ENCODE measurements at regions of chr17 and their contacts with region 1.

Region 1: DNA sequence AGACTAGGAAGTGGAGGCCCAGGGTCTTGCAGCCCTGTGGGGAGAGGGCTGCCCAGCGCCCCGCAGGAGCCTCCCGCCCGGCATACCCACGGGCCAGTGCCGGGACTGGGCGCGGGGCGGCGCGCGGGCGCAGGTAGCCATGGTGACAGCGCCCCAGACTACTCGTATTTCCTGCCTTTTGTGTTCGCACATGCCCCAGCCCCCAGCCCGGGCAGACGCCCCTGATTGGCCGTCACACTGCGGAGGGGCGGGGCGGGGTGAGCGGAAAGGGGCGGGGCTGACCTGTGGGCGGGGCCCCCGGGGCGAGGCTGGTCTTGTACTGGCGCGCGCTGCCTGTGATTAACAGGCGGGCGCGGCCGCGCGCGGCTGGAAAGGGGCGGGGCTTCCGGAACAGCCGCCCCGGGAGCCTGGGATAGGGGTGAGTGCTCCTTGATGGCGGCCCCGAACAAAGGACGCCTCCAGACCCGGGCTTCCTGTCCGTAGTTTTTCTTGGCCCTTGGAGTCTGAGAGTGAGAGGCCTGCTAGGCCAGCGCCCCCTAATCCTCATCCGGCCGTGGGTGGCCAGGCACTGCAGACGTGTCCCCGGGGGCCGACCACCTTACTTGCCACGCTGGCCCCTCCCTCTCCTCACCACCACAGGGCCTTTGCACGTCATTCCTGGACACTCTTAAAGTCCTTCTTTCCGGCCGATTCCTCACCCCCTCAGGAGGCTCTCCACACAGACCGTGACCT is 71.0 kb downstream of the RAI1 start:
- DNase-seq: peak; percentile 94 to 98 (median 97)
- ATAC-seq: peak; percentile 82
- H3K4me3 ChIP-seq: peak overlapping the region; percentile 87
- H3K4me3 Mint-ChIP-seq: peak overlapping the region; percentile 67
- H3K27ac ChIP-seq: peak overlapping the region; percentile 89 to 90
- H3K27ac Mint-ChIP-seq: peak overlapping the region; percentile 95
- H3K4me1 ChIP-seq: peaks cover 83% of the 10 kb centered on the region
- H3K4me1 Mint-ChIP-seq: peaks cover 81% of the 10 kb centered on the region
- H3K27me3 ChIP-seq: no peaks in the 10 kb centered on the region
- H3K27me3 Mint-ChIP-seq: no peaks in the 10 kb centered on the region
- CTCF ChIP-seq: peak; percentile 58

Region 2: DNA sequence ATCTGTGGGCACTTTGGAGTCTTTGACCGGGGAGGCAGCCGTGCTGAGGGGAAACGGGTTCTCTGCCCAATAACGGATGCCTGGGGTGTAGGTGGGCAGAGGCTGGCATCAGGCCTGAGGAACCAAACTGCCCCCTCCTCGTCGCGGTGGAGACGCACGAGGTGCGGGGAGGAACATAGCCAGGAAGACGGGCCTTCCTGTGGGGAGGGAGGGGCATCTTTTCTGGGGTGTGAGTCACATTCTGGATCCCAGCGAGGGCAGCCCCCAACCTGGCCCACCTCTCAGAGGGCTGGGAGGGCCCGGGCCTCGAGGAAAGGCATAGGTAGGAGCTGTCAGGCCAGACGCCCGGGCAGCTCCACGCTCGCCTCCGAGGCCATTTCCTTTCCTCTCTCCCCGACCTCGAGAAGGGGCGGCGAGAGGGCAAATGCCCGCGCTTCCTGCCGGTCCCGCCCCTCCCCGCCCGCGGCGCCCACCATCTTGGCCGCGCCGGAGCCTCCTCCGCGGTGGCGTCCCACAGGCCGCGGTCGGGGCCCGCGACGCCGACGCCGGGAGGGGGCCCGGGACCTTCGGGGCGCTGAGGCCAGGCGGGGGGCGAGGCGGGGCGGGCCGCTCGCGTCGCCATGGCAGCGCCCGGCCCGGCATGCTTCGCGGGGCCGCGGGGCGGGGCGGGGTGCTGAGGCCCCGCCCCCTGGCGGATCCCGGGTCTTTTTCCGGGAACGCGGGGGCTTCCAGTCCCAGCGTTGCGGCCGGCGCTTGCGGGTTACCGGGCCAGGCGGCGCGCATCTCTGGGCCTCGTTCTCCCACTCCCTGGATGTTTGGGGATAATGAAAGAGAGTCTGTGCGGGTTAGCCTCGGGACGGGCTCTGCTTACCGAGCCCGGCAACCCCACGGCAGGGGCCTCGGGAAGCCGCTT is 57.8 kb before region 1 on chr17:
- CTCF ChIA-PET with region 1: no interaction called
- POLR2A ChIA-PET with region 1: interaction called, 3 read pairs
- intact Hi-C with region 1: loop called in 1 of 2 experiments (anchors 2 kb)
- DNase-seq: peak; percentile 43 to 89 (median 63)
- ATAC-seq: peak; percentile 72
- H3K4me3 ChIP-seq: peak overlapping the region; percentile 76
- H3K4me3 Mint-ChIP-seq: peak overlapping the region; percentile 94
- H3K27ac ChIP-seq: peak overlapping the region; percentile 91 to 95
- H3K27ac Mint-ChIP-seq: peak overlapping the region; percentile 96
- H3K4me1 ChIP-seq: peaks cover 61% of the 10 kb centered on the region
- H3K4me1 Mint-ChIP-seq: peaks cover 62% of the 10 kb centered on the region
- H3K27me3 ChIP-seq: no peaks in the 10 kb centered on the region
- H3K27me3 Mint-ChIP-seq: no peaks in the 10 kb centered on the region
- CTCF ChIP-seq: no peak

Region 3: DNA sequence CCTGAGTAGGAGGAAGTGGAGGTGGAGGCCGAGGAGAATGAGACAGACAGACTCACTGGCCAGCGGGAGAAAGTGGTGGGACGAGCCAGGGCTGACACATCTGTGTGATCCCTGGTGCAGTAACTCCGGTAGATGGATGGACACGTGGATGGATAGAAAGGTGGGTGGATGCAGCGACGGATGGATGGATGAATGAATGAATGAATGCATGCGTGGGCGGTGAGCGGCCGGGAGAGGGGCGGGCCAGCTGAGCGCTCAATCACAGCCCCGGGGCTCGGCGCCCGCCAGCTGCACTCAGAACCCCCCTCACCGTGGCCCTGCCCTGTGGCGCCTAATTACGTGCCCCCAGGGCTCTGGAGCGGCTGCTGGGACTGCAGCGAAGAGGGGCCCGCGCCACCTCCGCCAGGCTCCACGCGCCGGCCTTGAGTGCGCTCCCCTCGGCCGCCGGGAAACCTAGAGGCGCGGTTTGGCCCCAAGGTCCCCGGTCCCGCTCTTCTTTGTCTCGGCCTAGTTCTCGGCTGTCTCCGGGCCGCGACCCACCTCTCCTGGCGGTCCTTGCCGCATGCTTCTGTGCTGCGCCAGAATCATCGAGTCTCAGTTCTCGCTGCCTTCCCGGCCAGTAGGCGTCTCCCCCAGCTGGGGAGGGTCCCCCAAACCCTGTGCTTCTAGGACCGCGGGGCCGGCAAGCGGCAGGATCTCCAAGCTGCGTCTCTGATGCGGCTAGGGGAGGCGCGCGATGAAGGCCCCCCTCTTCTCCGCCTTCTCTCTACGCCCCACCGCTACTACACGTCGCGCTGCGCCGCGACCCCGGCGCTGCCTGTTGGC is 30.0 kb before region 1 on chr17:
- CTCF ChIA-PET with region 1: no interaction called
- POLR2A ChIA-PET with region 1: no interaction called
- intact Hi-C with region 1: no loop called
- DNase-seq: peak in 2 of 14 experiments; percentile 10 to 20
- ATAC-seq: peak; percentile 28
- H3K4me3 ChIP-seq: peak overlapping the region; percentile 58
- H3K4me3 Mint-ChIP-seq: peak overlapping the region; percentile 81
- H3K27ac ChIP-seq: no peak overlapping the region
- H3K27ac Mint-ChIP-seq: peak overlapping the region; percentile 11
- H3K4me1 ChIP-seq: peaks cover 33% of the 10 kb centered on the region
- H3K4me1 Mint-ChIP-seq: peaks cover 56% of the 10 kb centered on the region
- H3K27me3 ChIP-seq: peaks cover 4 to 22% of the 10 kb centered on the region in 2 experiments
- H3K27me3 Mint-ChIP-seq: peaks cover 29% of the 10 kb centered on the region
- CTCF ChIP-seq: no peak

Region 4: GRCh38 chr17:17739388-17740066 is 12.7 kb before region 1 on chr17:
- CTCF ChIA-PET with region 1: no interaction called
- POLR2A ChIA-PET with region 1: interaction called, 21 read pairs
- intact Hi-C with region 1: no loop called
- DNase-seq: no peak
- ATAC-seq: no peak
- H3K4me3 ChIP-seq: no peak overlapping the region
- H3K4me3 Mint-ChIP-seq: peak overlapping the region; percentile 45
- H3K27ac ChIP-seq: no peak overlapping the region
- H3K27ac Mint-ChIP-seq: peak overlapping the region; percentile 81
- H3K4me1 ChIP-seq: peaks cover 46% of the 10 kb centered on the region
- H3K4me1 Mint-ChIP-seq: peaks cover 42% of the 10 kb centered on the region
- H3K27me3 ChIP-seq: no peaks in the 10 kb centered on the region
- H3K27me3 Mint-ChIP-seq: no peaks in the 10 kb centered on the region
- CTCF ChIP-seq: no peak

Region 5: GRCh38 chr17:17766077-17766743 is 14.0 kb after region 1 on chr17:
- CTCF ChIA-PET with region 1: no interaction called
- POLR2A ChIA-PET with region 1: no interaction called
- intact Hi-C with region 1: loop called in 1 of 2 experiments (anchors 1 kb)
- DNase-seq: peak in 1 of 14 experiments; percentile 21
- ATAC-seq: peak; percentile 63
- H3K4me3 ChIP-seq: no peak overlapping the region
- H3K4me3 Mint-ChIP-seq: peak overlapping the region; percentile 48
- H3K27ac ChIP-seq: no peak overlapping the region
- H3K27ac Mint-ChIP-seq: peak overlapping the region; percentile 80
- H3K4me1 ChIP-seq: peaks cover 11% of the 10 kb centered on the region
- H3K4me1 Mint-ChIP-seq: peaks cover 27% of the 10 kb centered on the region
- H3K27me3 ChIP-seq: no peaks in the 10 kb centered on the region
- H3K27me3 Mint-ChIP-seq: no peaks in the 10 kb centered on the region
- CTCF ChIP-seq: no peak

Region 6: GRCh38 chr17:17792551-17793377 is 40.5 kb after region 1 on chr17:
- CTCF ChIA-PET with region 1: no interaction called
- POLR2A ChIA-PET with region 1: interaction called, 4 read pairs
- intact Hi-C with region 1: loop called (anchors 5 kb)
- DNase-seq: peak; percentile 26 to 91 (median 56)
- ATAC-seq: peak; percentile 86
- H3K4me3 ChIP-seq: peak overlapping the region; percentile 22
- H3K4me3 Mint-ChIP-seq: peak overlapping the region; percentile 75
- H3K27ac ChIP-seq: peak overlapping the region; percentile 44 to 47
- H3K27ac Mint-ChIP-seq: peak overlapping the region; percentile 71
- H3K4me1 ChIP-seq: peaks cover 32% of the 10 kb centered on the region
- H3K4me1 Mint-ChIP-seq: peaks cover 25% of the 10 kb centered on the region
- H3K27me3 ChIP-seq: no peaks in the 10 kb centered on the region
- H3K27me3 Mint-ChIP-seq: no peaks in the 10 kb centered on the region
- CTCF ChIP-seq: no peak